ENCODE measurements at regions of chr22 and their contacts with region 1.

Region 1: GRCh38 chr22:28051787-28052356 is 132.8 kb upstream of the PITPNB start:
- DNase-seq: peak; percentile 24
- CTCF ChIP-seq: peak; percentile 64

Region 2: DNA sequence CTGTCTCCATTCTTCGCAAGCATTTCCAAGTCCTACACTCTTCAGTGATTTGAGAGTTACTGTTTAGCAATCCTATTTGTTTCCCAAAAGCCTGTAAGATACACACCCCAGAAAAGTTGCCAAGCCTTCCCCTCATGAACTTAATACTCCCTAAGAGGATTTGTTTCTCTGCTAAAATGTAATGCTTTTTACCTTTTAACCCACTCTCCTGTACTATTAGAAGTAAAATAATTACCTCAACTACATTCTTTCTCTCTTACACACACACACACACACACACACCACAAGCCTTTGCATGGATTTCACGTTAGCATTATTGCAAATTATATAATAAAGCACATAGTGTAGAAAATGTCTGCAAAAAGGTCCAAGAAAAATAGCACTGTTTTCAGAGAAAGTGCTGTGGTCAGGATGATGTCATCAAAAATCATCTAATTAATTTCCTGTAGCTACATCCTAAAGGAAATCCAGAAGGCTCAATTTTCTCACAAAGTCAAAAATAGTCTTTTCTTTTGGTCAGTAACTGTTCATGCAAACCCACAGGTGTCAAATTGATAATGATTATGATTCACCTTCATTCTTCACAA is 231.3 kb after region 1 on chr22:
- in situ Hi-C with region 1: no loop called
- DNase-seq: no peak
- CTCF ChIP-seq: no peak

Region 3: DNA sequence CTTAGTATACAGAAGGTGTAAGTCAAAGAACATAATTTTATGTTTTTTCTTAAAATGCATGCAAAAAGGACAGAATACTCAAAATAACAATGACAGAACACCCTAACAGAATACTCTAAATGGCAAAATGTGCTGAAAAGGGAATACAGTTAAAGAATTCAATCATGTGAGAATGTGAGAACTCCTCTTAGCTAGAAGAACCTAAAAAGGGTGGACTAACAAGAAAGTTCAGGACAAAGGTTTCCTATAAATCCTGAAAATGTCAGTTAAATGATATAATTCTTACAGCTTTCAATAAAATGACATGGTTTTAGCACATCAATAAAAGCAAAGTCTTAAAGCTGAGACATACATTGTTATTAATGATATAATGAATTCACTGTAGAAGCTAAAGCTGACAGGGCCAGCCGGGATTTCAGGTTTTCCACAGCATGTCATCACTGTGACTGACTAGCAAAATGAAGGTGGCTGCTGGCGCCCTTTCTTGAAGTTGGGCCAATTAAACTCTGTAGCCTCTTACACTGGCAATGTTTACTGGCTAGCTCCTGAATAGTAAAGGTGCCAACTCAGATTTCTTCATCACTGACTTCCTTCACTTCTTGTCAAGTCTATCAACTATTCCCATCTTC is 383.4 kb after region 1 on chr22:
- in situ Hi-C with region 1: loop called (anchors 10 kb)
- DNase-seq: no peak
- CTCF ChIP-seq: no peak

Region 4: DNA sequence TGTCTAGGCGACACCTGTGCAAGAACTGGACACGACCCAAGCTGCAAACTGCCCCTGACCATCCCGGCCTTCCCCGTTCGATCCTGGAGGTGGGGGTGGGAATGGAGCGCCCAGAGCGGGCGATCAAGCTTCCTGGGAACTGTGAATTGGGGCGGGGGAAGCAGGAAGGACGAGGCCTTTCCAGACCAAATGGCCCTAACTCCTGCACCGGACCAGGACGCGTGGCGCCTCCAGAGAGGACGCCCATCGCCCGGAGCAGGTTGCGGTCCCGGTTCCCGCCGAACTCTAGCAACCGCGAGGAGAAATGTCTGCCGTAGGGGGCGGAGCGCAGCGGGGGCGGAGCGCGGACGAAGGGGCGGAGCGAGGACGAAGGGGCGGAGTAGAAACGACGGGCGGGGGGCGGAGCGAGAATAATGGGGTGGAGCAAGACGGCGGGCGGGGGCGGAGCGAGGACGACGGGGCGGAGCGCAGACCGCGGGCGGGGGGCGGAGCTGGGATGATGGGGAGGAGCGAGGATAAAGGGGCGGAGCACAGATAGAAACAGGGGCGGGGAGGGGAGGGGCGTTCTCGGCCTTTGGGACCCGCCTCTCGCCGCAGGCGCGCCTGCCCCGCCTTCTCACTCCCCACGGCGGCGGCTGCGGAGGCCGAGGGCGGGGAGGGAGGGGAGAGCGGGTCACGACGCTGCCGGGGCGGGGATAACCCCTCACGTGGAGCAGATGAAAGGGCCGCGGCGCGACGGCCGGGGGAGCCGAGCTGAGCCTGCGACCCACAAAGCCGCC is 831.2 kb after region 1 on chr22 and contains the start of gene ZNRF3:
- in situ Hi-C with region 1: no loop called
- DNase-seq: peak; percentile 95
- CTCF ChIP-seq: no peak